ENCODE measurements at regions of chr20 and their contacts with region 1.

Region 1: DNA sequence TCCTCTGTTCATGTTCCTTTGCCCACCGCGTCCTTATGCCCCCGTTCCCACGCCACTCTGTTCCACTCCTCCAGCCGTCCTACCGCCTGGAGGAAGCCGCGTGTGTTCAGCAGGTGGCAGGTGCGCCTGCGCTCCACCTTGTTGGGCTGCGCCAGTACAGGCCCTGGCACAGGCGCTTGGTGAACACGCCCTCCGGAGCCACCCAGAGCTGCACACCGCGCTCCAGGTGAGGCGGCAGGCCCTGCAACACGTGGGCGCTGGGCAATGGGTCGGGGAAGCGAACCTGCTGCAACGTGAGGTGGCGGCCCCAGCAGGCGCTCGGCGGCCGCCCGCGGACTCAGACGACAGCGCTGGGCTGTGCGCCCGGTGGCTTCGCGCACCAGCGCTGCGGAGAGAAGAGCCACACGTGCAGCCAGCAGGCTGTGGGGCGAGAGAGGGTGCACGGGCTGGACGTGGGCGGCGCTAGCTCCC is 4.1 kb upstream of the FOXS1 start:
- DNase-seq: no peak
- H3K4me3 ChIP-seq: no peak overlapping the region
- H3K27me3 ChIP-seq: peaks cover 24% of the 10 kb centered on the region
- CTCF ChIP-seq: no peak

Region 2: DNA sequence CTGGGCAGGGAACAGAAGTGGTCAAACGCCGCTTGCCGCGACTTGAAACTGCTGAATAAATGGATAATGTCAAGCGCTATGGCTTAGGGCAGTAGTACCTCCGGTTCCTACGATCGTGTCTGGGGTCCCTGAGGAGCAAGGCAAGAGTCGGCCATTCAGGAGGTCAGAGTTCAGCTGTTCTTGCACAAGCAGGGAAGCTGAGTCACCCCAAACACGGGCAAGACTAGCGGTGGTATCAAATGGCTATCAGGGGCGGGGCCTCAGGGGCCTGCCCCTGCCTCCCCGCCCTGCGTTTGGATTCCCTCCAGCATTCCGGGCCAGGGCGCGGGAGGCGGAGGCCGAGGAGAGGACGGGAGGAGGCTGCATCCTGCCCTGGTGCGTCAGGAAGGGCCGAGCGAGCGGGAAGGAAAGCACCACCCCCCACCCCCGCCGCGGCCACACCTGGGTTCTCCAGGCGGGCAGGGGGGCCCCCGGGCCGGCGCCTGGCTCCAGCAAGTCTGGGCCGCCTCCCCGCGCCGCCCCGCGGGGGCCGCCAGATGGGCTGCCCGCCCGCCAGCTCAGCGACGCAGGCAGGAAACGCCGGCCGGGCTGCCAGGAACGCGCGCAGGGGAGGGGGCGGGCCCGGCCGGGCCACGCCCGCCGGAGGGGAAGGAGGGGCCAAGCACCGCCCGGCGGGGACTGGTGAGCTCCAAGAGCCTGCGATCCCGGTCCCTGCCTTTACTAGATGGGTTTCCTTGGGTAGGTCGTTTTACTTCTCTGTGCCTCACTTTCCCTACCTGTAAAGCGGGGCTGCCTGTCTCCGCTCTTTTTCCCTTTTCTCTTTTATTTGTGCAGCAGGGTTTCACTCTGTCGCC is 276.6 kb before region 1 on chr20:
- CTCF ChIA-PET with region 1: no interaction called
- POLR2A ChIA-PET with region 1: no interaction called
- DNase-seq: peak; percentile 93
- H3K4me3 ChIP-seq: peak overlapping the region; percentile 50
- H3K27me3 ChIP-seq: no peaks in the 10 kb centered on the region
- CTCF ChIP-seq: no peak

Region 3: DNA sequence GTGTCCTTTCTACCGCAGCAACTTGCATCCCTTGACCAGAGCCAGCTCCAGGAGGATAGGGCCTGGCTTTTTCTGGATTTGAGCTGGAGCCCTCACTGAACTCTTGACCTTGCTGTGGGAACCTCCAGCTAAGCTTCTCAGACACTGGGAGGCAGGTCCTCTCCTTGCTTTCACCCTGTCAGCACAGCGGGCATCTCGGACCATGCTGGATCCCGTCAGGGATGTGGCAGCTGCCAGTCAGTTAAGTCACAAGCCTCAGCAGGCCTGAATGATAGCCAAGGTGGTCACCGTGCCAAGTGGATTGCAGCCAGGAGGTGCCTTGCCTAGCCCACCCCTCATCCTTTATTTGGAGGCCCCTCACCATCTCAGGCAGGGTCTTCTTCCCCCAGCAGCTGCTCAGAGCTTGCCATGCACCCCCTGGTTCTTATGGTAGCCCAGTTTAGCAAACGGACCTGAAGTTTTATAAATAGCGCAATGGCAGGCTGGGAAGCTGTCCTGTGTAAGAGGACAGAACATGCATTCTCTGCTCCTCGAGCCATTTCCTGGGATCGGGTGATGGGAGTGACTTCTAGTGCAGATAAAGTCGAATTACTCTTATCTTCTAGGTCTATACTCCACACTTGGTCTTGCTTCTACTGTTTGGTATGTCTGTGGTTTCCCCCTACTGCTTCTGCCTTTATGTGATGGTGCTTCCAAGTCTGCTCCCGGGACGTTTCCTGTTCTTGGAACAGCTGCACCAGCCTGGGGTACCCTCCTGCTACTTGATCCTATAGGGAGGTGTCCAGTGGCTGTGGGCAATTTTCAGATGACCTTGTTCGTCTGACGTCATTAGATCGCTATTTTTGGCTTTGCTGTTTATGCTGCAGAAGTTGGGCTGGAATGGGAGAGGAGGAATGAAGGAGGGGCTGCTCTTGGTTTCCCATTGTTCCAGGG is 37.4 kb before region 1 on chr20:
- CTCF ChIA-PET with region 1: interaction called, 27 read pairs
- POLR2A ChIA-PET with region 1: no interaction called
- DNase-seq: no peak
- H3K4me3 ChIP-seq: no peak overlapping the region
- H3K27me3 ChIP-seq: no peaks in the 10 kb centered on the region
- CTCF ChIP-seq: no peak

Region 4: DNA sequence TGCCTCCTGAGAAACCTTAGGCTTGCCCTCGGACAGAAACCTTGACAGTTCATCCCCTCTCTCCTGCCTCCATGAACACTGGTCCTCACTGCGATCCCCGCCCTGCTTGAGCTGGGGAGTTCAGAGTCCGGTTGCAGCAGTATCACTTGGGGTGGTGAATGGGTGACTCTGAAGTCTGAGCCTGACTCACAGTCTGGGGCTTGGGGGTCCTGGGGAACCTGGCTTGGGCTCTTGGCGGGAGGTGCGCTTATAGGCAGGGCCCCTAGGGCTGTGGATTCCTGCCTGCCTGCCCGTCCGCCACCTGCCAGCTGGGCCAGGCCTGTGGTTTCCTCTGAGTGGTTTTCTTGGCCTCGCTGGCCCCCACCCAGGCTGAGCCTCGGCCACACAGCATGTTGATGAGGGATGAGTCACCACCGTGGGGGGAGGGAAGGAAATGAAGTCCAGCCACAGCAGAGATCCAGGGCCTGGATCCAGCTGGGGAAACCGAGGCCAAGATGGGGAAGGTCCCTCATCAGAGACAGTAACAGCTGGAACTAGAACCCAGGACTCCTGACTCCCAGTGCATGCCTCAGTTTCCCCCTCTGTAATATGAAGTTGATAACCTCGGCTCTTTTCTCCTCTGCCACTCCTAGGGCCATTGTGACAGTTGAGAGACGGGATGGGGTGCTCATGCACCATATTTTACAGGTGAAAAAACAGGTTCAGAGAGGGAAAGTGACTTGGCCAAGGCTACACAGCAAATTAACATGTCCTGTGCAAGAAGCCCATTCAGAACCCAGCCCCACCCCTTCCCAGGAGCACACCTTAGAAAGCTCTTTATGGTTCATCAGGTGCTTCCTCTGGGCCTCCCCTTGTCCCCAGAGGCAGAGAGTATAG is 13.3 kb before region 1 on chr20:
- CTCF ChIA-PET with region 1: interaction called, 39 read pairs
- POLR2A ChIA-PET with region 1: no interaction called
- DNase-seq: peak; percentile 41
- H3K4me3 ChIP-seq: no peak overlapping the region
- H3K27me3 ChIP-seq: 0 out of 2 replicates have a peak, but pooled peaks cover 2% of the 10 kb centered on the region
- CTCF ChIP-seq: no peak

Region 5: DNA sequence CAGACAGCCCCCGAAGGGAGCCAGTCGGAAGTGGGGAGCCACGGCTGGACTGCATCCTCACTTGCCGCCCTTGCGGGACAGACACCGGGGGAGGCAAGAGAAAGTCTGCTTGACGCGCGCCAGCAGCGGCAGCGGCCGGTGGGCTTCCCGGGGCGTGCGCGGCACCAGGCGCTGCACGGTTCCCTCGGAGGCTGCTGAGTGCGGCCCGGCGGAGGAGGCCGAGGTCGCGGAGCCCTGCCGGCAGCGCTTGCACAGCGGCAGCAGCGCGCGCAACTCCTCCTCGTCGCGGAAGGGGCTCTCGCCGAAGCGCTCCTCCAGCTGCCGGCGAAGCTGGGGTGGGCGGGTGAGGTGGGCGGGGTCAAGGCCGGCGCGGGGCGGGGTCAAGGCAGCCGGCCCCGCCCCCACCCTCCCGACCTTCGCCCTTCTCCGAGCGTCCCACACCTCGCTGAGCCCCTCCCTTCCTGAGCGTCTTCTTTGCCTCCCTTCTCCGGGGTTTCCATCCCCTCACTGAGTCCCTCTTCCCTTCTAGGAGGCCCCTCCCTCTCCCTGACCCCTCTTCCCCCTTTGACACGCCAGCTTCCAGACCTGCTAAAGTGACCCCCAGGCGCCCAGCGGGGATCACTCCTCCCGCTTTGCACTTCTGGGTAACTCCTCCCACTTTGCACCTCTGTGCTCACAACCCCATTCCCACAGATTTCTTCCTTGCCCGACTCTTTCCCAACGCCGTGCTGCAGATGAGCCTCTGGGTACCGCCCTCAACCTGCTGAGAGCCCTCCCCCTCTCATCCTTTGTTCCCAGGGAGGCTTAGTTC is 12.1 kb after region 1 on chr20:
- CTCF ChIA-PET with region 1: interaction called, 54 read pairs
- POLR2A ChIA-PET with region 1: no interaction called
- DNase-seq: no peak
- H3K4me3 ChIP-seq: peak overlapping the region; percentile 33
- H3K27me3 ChIP-seq: peaks cover 42% of the 10 kb centered on the region
- CTCF ChIP-seq: no peak

Region 6: GRCh38 chr20:31951530-31952453 is 102.3 kb after region 1 on chr20 and contains the start of gene PDRG1:
- CTCF ChIA-PET with region 1: interaction called, 71 read pairs
- POLR2A ChIA-PET with region 1: no interaction called
- DNase-seq: peak; percentile 68
- H3K4me3 ChIP-seq: peak within 1 kb of the TSS; percentile 56
- H3K27me3 ChIP-seq: peaks cover 4% of the 10 kb centered on the region
- CTCF ChIP-seq: peak; percentile 99
- polyA plus RNA-seq, gene PDRG1: 13.9 and 16.5 TPM in 2 replicates

Region 7: DNA sequence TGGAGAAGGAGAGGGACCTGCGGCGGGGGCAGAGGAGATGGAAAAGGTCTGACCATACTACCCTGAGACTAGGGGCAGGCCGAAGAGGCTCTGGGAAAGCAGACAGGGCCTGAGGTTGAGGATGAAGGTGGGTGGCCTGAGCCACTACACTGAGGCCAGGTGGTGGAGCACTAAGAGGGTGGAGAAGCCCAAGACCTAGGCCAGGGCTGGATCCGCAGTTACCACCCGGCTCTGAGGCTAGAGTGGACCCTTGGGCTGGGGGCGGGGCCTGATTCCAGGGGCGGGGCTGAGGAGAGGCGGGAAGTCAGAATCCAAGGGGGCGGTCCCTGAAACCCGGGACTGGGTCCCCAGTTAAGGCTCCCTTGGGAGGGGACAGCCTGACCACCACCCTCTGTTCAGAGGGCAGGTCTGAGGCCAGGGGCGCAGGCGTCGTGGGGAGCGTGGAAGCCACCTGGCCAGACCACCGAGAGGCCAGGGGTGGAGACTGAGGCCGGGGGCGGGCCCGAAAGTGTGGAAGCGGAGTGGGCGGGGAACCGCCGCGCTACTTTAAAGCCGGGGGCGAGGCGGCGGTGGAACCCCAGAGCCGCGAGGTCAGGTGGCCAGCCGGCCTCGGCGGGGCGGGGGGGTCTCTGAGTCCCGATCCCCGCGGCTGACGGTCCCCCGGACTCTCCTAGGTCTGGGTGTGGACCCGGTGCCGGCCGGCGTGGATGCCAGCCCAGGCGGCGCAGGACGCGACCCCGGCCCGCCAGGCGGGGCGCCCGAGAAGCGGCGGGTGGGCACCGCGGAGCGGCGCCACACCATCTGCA is 169.0 kb after region 1 on chr20:
- CTCF ChIA-PET with region 1: interaction called, 10 read pairs
- POLR2A ChIA-PET with region 1: no interaction called
- DNase-seq: no peak
- H3K4me3 ChIP-seq: peak overlapping the region; percentile 28
- H3K27me3 ChIP-seq: peaks cover 32% of the 10 kb centered on the region
- CTCF ChIP-seq: no peak

Region 8: DNA sequence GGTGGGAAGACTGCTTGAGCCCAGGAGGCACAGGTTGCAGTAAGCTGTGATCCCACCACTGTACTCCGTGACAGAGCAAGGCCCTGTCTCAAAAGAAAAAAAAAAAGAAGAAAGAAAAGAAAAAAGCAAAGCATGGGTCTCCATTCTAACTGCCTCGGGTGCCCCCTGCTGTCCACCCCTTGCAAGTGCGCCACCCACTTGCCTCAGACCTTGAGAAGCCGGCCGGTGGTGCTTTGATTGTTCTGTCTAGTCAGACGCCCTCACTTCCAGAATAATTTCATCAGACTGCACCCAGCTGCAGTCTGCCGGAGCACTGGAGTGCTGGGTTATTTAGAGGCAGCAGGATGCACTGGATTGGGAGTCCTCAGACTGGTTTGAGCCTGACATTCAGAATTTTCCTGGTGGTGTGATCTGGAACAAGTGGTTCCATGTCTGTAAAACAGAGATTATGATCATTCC is 242.4 kb after region 1 on chr20:
- CTCF ChIA-PET with region 1: interaction called, 43 read pairs
- POLR2A ChIA-PET with region 1: no interaction called
- DNase-seq: no peak
- H3K4me3 ChIP-seq: no peak overlapping the region
- H3K27me3 ChIP-seq: peaks cover 12% of the 10 kb centered on the region
- CTCF ChIP-seq: peak; percentile 96

Region 9: DNA sequence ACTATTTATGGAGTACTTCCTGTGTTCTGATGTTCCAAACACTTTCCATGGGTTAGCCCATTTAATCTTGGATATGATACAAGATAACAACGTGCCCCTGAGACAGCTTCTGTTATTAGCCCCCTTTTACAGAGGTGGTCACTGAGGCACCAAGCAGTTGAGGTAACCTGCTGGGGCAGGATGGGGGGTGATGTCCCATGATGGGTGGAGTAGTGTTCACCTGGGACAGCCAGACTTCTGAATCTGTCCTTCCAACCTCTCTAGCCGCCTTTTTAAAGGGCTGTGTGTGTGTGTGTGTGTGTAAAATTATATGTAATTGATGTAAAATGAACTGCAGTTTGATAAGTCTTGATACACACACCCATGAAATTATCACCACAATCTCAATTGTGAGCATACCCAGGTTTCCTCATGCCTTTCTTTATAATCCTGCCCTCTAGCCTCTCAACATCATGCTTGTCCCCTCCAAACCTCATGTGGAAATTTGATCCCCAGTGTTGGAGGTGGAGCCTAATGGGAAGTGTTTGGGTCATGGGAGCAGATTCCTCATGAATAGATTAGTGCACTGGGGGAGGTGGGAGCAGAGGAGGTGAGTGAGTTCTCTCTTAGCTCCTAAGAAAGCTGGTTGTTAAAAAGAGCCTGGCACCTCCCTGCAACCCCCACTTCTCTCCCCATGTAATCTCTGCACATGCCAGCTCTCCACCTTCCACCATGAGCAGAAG is 318.9 kb after region 1 on chr20:
- CTCF ChIA-PET with region 1: no interaction called
- POLR2A ChIA-PET with region 1: no interaction called
- DNase-seq: no peak
- H3K4me3 ChIP-seq: no peak overlapping the region
- H3K27me3 ChIP-seq: no peaks in the 10 kb centered on the region
- CTCF ChIP-seq: no peak

Measured in BJ (cell line).